ENCODE measurements at regions of chr20 and their contacts with region 1.

Region 1: GRCh38 chr20:9306517-9306916 is 207.9 kb upstream of the LAMP5 start:
- DNase-seq: no peak
- H3K4me3 ChIP-seq: no peak overlapping the region
- H3K27ac ChIP-seq: no peak overlapping the region
- H3K4me1 ChIP-seq: peaks cover 9 to 11% (median 10%) of the 10 kb centered on the region in 4 donors
- H3K27me3 ChIP-seq: no peaks in the 10 kb centered on the region
- CTCF ChIP-seq: no peak
- EP300 ChIP-seq: no peak
- POLR2A ChIP-seq: no peak

Region 2: GRCh38 chr20:9319687-9320384 is 13.3 kb after region 1 on chr20:
- intact Hi-C with region 1: loop called (anchors 2 kb)
- DNase-seq: no peak
- H3K4me3 ChIP-seq: peak overlapping the region in 3 of 4 donors; percentile 13 to 37 (median 26)
- H3K27ac ChIP-seq: peak overlapping the region in 2 of 4 donors; percentile 2 to 44
- H3K4me1 ChIP-seq: peaks cover 13 to 22% (median 18%) of the 10 kb centered on the region in 4 donors
- H3K27me3 ChIP-seq: no peaks in the 10 kb centered on the region
- CTCF ChIP-seq: no peak
- EP300 ChIP-seq: no peak
- POLR2A ChIP-seq: no peak